ENCODE measurements at regions of chr5 and their contacts with region 1.

Region 1: DNA sequence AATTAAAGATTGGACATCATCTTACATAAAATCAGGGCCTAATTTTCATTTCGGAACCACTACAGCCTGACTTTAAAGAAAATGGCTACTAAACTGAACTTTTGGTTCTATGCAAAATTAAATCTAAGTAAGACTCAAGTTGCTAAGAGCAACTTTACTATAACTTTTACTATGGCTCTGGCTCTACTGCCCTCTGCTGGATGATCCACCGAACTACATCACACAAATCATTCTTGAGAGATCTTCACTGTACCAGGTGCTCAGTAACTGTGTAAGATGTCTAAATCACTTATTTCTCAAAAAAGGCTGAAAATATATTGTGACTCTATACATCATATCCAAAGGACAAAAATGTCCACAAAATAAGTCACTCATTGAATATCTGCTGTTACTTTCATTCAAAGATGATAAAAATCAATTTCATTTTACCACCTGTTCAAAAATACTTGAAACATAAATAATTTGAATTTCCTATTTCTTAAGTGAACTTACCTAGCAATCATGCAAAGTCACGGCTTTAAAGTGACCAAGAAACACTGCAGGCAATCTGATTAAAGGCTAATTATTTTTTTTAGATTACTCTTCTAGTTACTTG is 13.5 kb downstream of the MOCS2 start:
- DNase-seq: no peak
- ATAC-seq: peak; percentile 84
- H3K4me3 Mint-ChIP-seq: no peak overlapping the region
- H3K27ac Mint-ChIP-seq: no peak overlapping the region
- H3K4me1 Mint-ChIP-seq: peaks cover 4% of the 10 kb centered on the region
- H3K27me3 Mint-ChIP-seq: no peaks in the 10 kb centered on the region
- CTCF ChIP-seq: peak; percentile 99

Region 2: DNA sequence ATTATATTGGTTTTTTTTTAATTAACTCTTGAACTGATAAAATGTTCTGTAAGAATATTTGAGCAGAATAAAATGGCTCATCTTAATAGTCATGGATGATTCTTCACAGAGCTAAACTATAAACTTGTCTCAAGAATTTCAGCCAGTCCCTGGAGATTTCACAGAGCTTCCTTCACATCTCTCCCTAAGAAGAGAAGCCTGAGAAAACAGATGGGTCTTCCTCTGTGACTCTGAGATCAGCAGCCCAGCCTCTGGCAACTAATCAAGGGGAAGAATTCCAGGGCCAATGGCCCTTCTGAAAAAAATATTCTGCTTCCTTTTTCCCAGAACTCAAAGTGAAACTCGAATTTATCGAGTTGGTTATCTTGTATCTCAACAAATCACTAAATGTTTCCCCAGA is 430.5 kb before region 1 on chr5:
- CTCF ChIA-PET with region 1: no interaction called
- POLR2A ChIA-PET with region 1: no interaction called
- intact Hi-C with region 1: loop called (anchors 10 kb)
- DNase-seq: no peak
- ATAC-seq: no peak
- H3K4me3 Mint-ChIP-seq: no peak overlapping the region
- H3K27ac Mint-ChIP-seq: no peak overlapping the region
- H3K4me1 Mint-ChIP-seq: no peaks in the 10 kb centered on the region
- H3K27me3 Mint-ChIP-seq: peaks cover 6% of the 10 kb centered on the region
- CTCF ChIP-seq: no peak

Region 3: GRCh38 chr5:52787600-52788504 is 308.2 kb before region 1 on chr5 and contains the starts of genes ITGA1 and PELO:
- CTCF ChIA-PET with region 1: no interaction called
- POLR2A ChIA-PET with region 1: no interaction called
- intact Hi-C with region 1: loop called (anchors 1 kb)
- DNase-seq: peak; percentile 51
- ATAC-seq: peak; percentile 80
- H3K4me3 Mint-ChIP-seq: peak within 1 kb of the TSS; percentile 91
- H3K27ac Mint-ChIP-seq: peak within 1 kb of the TSS; percentile 78
- H3K4me1 Mint-ChIP-seq: peaks cover 15% of the 10 kb centered on the region
- H3K27me3 Mint-ChIP-seq: peaks cover 22% of the 10 kb centered on the region
- CTCF ChIP-seq: no peak
- total RNA-seq, gene ITGA1: 28.4 and 34.0 TPM in 2 replicates
- total RNA-seq, gene PELO: 20.0 and 23.0 TPM in 2 replicates

Region 4: DNA sequence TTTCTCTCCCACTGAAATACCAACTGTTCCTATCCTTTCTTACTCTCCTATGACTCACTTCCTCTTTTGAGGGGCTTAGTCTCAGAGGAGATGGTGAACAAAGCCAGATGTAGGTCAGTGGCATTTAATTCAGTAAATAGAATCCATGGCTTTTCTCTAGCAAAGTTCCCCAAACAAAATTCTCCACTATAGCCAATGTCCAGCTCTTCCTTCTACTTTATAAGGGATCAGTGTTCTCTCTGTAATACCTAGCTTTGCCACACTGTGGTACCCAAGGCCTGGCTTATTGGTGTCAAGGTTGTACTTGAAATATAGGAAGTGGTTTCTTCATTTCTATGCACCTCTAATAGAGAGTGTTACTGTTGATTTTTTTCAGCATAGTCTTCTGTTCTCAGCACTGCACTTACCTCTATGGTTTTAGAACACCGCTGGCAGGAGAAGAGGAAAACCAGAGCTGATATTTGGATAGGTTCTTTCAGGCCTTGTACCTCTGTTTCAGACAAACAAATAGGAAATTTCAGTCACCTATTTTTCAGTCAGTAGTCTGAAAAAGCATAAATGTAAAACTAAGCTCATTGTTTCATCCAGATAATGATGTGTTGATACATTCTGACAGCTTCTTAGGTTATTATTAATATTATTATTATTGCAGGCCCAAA is 147.5 kb before region 1 on chr5:
- CTCF ChIA-PET with region 1: interaction called, 27 read pairs
- POLR2A ChIA-PET with region 1: no interaction called
- intact Hi-C with region 1: loop called (anchors 1 kb)
- DNase-seq: no peak
- ATAC-seq: peak; percentile 96
- H3K4me3 Mint-ChIP-seq: no peak overlapping the region
- H3K27ac Mint-ChIP-seq: no peak overlapping the region
- H3K4me1 Mint-ChIP-seq: peaks cover 10% of the 10 kb centered on the region
- H3K27me3 Mint-ChIP-seq: peaks cover 5% of the 10 kb centered on the region
- CTCF ChIP-seq: no peak

Region 5: GRCh38 chr5:54217826-54218503 is 1121.9 kb after region 1 on chr5:
- CTCF ChIA-PET with region 1: interaction called, 3 read pairs
- POLR2A ChIA-PET with region 1: no interaction called
- intact Hi-C with region 1: loop called (anchors 2 kb)
- DNase-seq: no peak
- ATAC-seq: no peak
- H3K4me3 Mint-ChIP-seq: no peak overlapping the region
- H3K27ac Mint-ChIP-seq: no peak overlapping the region
- H3K4me1 Mint-ChIP-seq: peaks cover 3% of the 10 kb centered on the region
- H3K27me3 Mint-ChIP-seq: no peaks in the 10 kb centered on the region
- CTCF ChIP-seq: peak; percentile 25